ENCODE measurements at regions of chr5 and their contacts with region 1.

Region 1: DNA sequence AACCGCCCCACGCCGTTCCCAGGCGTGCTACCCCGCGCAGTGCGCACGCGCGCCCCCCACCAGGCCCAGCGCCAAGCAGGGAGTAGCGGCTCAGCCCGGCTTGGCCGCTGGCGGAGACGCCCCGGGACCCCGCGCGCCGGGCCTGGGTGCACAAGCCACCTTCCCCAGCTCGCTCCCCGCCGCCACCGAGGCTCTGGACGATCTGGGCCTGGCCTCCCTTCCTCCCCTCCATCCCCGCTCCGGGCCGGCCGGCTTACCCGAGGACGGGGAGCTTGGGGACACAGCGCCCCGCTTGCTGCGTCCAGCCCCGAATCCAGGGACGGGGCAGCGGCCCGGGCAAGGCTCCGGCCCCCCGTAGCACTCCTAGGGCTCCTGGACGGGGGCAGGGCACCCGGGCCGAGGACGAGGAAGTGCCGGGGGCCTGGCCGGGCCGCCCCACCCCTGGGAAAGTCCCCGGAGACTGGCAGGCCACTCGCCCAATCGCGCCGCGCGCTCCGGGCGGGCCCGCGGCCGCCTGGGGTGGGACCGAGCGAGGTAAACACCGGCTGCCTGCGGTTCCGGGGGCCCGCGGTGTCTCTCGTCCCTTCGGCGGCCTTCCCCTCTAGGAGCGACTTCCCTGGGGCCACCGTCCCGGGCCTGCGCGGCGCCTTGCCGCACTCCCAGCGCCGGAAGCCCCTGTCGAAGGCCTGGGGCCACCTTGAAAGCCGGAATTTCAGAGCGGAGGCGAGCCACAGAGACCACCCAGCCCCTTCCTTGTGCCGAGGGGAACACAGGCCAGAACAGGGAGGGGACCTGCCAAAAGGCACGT is at the start of gene TNIP1:
- DNase-seq: peak; percentile 96
- ATAC-seq: peak; percentile 67
- H3K4me3 Mint-ChIP-seq: peak within 1 kb of the TSS; percentile 80
- H3K27ac Mint-ChIP-seq: peak within 1 kb of the TSS; percentile 91
- H3K4me1 Mint-ChIP-seq: peaks cover 74% of the 10 kb centered on the region
- H3K27me3 Mint-ChIP-seq: no peaks in the 10 kb centered on the region
- total RNA-seq, gene TNIP1: 351 to 408 TPM

Region 2: GRCh38 chr5:151051066-151051930 is 29.5 kb before region 1 on chr5:
- CTCF ChIA-PET with region 1: interaction called, 11 read pairs
- POLR2A ChIA-PET with region 1: no interaction called
- intact Hi-C with region 1: loop called in 1 of 2 experiments (anchors 5 kb)
- DNase-seq: peak; percentile 82
- ATAC-seq: peak; percentile 84
- H3K4me3 Mint-ChIP-seq: no peak overlapping the region
- H3K27ac Mint-ChIP-seq: no peak overlapping the region
- H3K4me1 Mint-ChIP-seq: peaks cover 5% of the 10 kb centered on the region
- H3K27me3 Mint-ChIP-seq: no peaks in the 10 kb centered on the region

Region 3: DNA sequence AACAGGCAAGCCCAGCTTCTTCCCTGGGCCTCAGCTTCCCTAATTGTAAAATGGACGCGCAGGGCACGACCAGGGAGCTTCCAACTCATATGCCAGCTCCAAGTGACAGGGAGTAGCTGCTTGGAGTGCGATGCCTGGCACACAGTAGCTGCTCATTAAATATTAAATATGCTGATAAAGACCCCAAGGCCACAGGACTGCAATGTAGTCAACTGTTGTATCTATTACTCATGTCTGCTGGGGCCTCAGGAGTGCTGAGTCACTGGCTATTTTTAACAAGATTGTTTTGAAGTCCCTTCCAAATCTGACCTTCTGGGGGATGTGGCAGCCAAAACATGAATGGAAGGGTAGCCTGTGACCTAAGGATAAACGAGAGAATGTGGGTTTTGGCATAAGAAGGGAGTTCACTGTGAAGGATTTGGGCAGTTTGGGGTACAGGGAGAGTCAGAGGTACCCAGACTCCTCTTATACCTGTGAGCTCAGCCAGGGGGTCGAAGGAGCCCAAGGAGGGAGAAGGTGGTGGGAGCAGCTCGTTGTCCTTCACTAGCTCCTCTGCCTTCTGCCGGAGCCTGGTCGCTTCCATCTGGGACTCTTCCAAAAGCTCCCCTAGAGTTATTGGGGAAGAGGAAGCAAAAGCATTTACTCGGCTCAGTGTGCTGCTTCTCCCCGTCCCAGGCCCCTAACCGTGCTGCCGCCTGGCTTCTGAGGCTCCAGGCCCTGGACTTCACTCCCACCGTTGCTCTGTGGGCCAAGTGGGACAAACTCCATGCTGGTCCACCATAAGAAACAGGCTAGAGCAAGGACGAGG is 17.5 kb before region 1 on chr5:
- CTCF ChIA-PET with region 1: interaction called, 11 read pairs
- POLR2A ChIA-PET with region 1: interaction called, 21 read pairs
- intact Hi-C with region 1: loop called (anchors 1 kb)
- DNase-seq: no peak
- ATAC-seq: no peak
- H3K4me3 Mint-ChIP-seq: no peak overlapping the region
- H3K27ac Mint-ChIP-seq: peak overlapping the region; percentile 87
- H3K4me1 Mint-ChIP-seq: peaks cover 96% of the 10 kb centered on the region
- H3K27me3 Mint-ChIP-seq: no peaks in the 10 kb centered on the region

Region 4: DNA sequence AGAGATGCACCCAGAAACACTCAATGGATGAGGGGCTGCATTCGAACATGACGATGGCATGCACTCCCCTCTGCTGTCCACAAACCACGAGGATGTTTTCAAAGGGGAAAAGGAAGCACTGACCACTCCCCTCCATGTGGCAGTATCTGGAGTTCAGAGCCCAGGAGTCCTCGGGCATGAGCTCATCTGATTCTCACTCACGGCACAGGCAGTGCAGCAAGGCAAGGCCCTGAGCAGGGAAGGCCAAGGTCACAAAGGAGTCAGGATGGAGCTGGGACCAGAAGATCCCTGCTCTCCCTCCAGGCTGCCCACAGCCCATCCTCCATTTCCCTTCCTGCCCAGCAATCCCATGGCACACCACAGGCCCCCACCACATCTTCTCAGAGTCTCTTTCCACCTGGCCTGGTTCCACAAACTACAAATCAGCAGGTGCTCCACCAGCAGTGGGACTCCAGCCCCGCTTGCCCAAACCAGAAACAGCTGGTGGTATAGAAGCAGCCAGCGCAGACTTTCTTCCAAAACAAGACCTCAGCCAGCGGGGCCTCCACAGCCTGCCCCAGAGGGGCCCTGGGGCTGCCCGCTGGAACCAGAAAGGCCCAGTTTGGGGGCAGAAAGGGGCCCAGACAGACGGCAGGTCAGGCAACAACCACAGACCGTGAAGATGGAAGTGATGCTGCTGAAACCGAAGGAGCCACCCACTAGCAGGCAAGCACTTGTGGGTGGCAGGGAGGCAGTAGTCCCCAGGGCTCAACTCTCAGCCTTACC is 12.2 kb before region 1 on chr5:
- CTCF ChIA-PET with region 1: interaction called, 11 read pairs
- POLR2A ChIA-PET with region 1: interaction called, 21 read pairs
- intact Hi-C with region 1: loop called (anchors 1 kb)
- DNase-seq: peak; percentile 75
- ATAC-seq: peak; percentile 60
- H3K4me3 Mint-ChIP-seq: peak overlapping the region; percentile 48
- H3K27ac Mint-ChIP-seq: peak overlapping the region; percentile 91
- H3K4me1 Mint-ChIP-seq: peaks cover 97% of the 10 kb centered on the region
- H3K27me3 Mint-ChIP-seq: no peaks in the 10 kb centered on the region

Region 5: DNA sequence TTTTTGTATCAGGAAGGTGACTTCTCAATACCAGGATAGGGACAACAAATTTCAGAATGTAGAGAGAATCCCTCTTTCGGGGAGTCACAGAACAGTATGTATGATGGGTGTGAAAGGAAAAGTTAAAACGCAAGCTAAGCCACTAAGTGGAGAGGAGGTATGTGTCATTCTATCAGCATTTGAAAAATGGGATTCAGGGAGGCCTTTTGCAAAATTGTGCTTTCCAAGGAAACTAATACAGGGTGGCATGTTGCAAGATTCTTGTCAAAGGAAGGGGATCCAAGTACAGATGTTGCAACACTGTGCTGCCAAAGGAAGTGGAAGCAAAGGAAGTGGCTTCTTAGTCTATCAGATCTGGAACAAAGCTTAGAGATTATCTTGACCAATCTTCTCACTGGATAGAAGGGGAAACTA is 12.7 kb after region 1 on chr5:
- CTCF ChIA-PET with region 1: interaction called, 8 read pairs
- POLR2A ChIA-PET with region 1: interaction called, 6 read pairs
- intact Hi-C with region 1: loop called (anchors 1 kb)
- DNase-seq: no peak
- ATAC-seq: peak; percentile 5
- H3K4me3 Mint-ChIP-seq: peak overlapping the region; percentile 54
- H3K27ac Mint-ChIP-seq: peak overlapping the region; percentile 93
- H3K4me1 Mint-ChIP-seq: peaks cover 63% of the 10 kb centered on the region
- H3K27me3 Mint-ChIP-seq: no peaks in the 10 kb centered on the region

Region 6: GRCh38 chr5:151157426-151158286 is 76.8 kb after region 1 on chr5 and contains the start of gene ANXA6:
- CTCF ChIA-PET with region 1: interaction called, 3 read pairs
- POLR2A ChIA-PET with region 1: no interaction called
- intact Hi-C with region 1: loop called in 1 of 2 experiments (anchors 1 kb)
- DNase-seq: peak; percentile 80
- ATAC-seq: peak; percentile 47
- H3K4me3 Mint-ChIP-seq: peak within 1 kb of the TSS; percentile 91
- H3K27ac Mint-ChIP-seq: peak within 1 kb of the TSS; percentile 93
- H3K4me1 Mint-ChIP-seq: peaks cover 59% of the 10 kb centered on the region
- H3K27me3 Mint-ChIP-seq: no peaks in the 10 kb centered on the region
- total RNA-seq, gene ANXA6: 322 to 332 TPM

Region 7: DNA sequence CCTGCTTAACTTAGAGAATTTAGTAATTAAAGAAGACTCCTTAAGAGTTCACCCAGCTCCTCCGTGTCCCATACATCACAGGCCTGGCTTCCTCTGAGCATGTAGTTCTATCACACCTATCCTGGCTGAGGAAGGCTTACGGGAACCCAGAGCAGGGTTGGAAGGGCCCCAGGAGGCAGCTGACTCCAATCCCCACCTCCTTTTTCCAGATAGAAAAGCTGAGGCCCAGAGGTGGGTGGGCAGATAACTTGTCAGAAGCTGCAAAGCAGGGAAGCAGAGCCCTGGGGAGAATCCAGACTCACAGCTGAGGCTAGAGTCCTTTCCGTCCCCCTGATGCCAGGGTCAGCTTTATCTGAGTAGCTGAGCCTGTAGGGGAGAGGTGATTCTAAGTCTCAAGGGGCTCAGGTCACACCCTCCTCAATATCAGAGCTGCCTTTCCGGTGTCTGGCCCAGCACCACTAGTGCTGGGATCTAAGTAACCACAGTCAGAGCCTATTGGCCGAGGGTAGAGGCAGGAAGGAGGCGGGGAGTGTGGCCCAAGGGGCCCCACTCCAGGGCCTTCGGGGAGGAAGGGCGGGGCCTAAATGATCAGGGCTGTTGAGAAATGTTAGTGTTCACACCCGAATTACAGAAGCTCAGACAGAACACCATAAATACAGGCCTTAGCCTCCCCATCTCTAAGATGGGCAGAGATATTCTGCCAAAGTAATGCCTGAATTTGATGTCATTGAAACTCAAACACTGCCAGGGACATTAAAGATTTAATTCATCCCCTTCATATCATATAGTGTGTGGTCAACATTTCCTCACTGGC is 133.2 kb after region 1 on chr5:
- CTCF ChIA-PET with region 1: interaction called, 3 read pairs
- POLR2A ChIA-PET with region 1: interaction called, 4 read pairs
- intact Hi-C with region 1: loop called (anchors 1 to 5 kb)
- DNase-seq: peak; percentile 92
- ATAC-seq: peak; percentile 89
- H3K4me3 Mint-ChIP-seq: peak overlapping the region; percentile 74
- H3K27ac Mint-ChIP-seq: peak overlapping the region; percentile 97
- H3K4me1 Mint-ChIP-seq: peaks cover 83% of the 10 kb centered on the region
- H3K27me3 Mint-ChIP-seq: no peaks in the 10 kb centered on the region